Esophagus muscularis mucosa (tissue), 4 donors: ENCODE measurements at regions of chr14 and their contacts with region 1.

Region 1: GRCh38 chr14:68685419-68686204 is 107.3 kb downstream of the ZFP36L1 start:
- DNase-seq: no peak
- H3K4me3 ChIP-seq: no peak overlapping the region
- H3K27ac ChIP-seq: peak overlapping the region; percentile 81 to 89 (median 85)
- H3K4me1 ChIP-seq: peaks cover 51 to 92% (median 84%) of the 10 kb centered on the region in 4 donors
- H3K27me3 ChIP-seq: no peaks in the 10 kb centered on the region
- CTCF ChIP-seq: no peak
- EP300 ChIP-seq: peak; percentile 53
- POLR2A ChIP-seq: no peak

Region 2: DNA sequence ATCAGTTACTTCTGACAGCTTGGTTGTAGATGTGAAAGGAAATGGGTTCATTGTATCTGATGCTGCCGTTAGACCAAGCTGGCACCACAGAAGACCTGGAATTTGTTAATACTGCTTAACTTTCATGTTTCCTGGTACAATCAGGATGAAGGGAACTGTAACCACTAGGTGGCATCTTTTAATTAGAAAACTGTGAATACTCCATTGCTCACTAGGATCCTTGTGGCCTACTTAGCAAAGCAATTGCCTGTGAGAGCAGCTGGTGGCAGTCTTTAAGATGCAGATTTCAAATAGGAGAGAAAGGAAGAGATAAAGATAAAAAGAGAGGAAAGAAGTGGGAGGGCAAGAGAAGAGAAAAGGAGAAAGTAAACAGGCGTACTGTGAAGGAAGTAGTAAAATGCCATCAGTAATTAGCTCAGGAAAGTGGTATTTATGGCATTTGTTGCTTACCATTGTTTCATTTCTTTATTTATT is 751.6 kb before region 1 on chr14:
- intact Hi-C with region 1: loop called (anchors 10 kb)
- DNase-seq: no peak
- H3K4me3 ChIP-seq: no peak overlapping the region
- H3K27ac ChIP-seq: peak overlapping the region; percentile 36 to 65 (median 60)
- H3K4me1 ChIP-seq: peaks cover 12 to 21% (median 14%) of the 10 kb centered on the region in 4 donors
- H3K27me3 ChIP-seq: no peaks in the 10 kb centered on the region
- CTCF ChIP-seq: peak; percentile 77 to 92 (median 80)
- EP300 ChIP-seq: no peak
- POLR2A ChIP-seq: no peak

Region 3: DNA sequence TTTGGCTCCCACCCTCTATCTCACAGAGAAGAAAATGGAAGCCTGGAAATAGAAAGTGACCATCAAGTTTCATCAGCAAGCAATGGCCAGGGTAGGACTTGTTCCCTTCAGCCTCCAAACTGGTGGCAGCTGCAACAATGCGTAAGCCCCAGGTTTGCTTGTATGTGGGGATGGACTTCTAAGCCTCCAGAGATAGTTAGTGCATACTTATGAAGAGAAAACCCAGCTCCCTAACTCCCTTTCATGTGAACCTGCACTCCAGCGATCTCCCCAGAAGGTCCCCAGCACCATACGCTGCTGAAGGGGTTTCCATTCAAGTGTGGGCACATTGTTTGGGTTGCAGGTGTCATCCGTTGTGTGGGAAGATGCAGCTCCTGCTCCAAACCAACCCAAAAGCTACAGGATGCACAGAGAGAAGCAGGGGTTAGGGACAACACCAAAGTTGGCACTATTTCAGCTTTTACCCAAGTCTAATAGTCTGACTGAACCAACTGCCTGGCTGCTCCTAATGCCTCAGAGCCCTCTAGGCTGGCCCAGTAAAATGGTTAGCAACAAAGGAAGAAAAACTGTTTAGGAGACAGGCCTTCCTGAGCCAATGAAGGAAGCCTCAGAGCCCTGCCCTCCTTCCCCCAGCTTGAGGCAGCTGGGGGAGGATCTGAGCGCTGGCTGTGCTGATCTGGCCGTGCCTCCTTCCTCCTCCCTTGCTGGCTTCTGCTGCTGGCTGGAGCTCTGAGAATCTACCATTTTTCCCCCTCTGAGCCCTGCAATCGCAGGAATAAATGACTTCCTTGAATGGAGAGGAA is 94.9 kb after region 1 on chr14:
- intact Hi-C with region 1: loop called (anchors 5 kb)
- DNase-seq: no peak
- H3K4me3 ChIP-seq: no peak overlapping the region
- H3K27ac ChIP-seq: peak overlapping the region; percentile 59 to 100 (median 76)
- H3K4me1 ChIP-seq: peaks cover 36 to 61% (median 54%) of the 10 kb centered on the region in 4 donors
- H3K27me3 ChIP-seq: no peaks in the 10 kb centered on the region
- CTCF ChIP-seq: no peak
- EP300 ChIP-seq: no peak
- POLR2A ChIP-seq: no peak

Region 4: GRCh38 chr14:68788996-68789820 is 103.6 kb after region 1 on chr14:
- intact Hi-C with region 1: loop called (anchors 5 kb)
- DNase-seq: no peak
- H3K4me3 ChIP-seq: peak overlapping the region; percentile 83 to 95 (median 87)
- H3K27ac ChIP-seq: peak overlapping the region; percentile 99 to 100 (median 100)
- H3K4me1 ChIP-seq: peaks cover 15 to 51% (median 42%) of the 10 kb centered on the region in 4 donors
- H3K27me3 ChIP-seq: peaks cover 0 to 4% (median 0%) of the 10 kb centered on the region in 4 donors
- CTCF ChIP-seq: peak; percentile 72 to 82 (median 73)
- EP300 ChIP-seq: no peak
- POLR2A ChIP-seq: peak; percentile 9